IMR-90 (cell line): ENCODE measurements at regions of chr12 and their contacts with region 1.

Region 1: DNA sequence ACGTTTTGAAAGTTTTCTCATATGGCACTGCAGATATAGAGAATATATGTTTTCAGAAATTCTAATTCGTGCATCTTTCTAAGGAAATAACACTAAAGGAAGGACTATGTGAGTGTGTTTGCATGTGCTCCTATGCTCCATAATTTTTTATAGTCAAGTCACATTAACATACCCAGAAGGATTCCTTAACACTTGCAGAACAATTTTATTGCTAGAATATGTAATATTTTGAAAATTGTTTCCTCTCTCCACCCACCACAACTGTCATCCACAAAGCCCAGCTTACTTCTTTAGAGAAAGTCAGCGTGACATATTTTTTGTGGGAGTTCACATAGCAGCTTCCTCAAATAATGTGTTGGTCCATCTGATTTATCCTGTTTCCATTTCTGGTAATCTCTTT is 604.6 kb upstream of the MGAT4C start:
- DNase-seq: no peak
- ATAC-seq: no peak
- H3K4me3 ChIP-seq: no peak overlapping the region
- H3K27ac ChIP-seq: no peak overlapping the region
- H3K4me1 ChIP-seq: no peaks in the 10 kb centered on the region
- H3K27me3 ChIP-seq: no peaks in the 10 kb centered on the region
- CTCF ChIP-seq: no peak
- POLR2A ChIP-seq: no peak
- RAD21 ChIP-seq: no peak

Region 2: DNA sequence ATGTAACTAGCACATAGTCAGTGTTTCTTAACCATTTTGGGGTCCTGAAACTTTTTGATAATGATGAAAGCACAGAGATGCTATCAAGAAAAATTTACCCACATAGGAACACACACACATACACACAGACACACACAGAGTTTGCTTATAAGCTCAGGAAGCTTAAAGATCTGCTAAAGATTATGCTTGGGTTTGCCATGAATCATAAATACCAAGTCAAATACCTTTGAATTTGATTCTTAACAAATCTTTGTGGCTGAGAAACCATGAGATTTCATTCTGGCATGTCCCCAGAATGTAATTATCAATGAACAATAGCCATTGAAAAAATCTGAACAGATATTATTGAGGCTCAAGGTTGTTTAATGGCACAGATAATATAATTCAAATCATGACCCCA is 897.5 kb before region 1 on chr12:
- CTCF ChIA-PET with region 1: no interaction called
- POLR2A ChIA-PET with region 1: no interaction called
- dilution Hi-C with region 1: no loop called
- in situ Hi-C with region 1: no loop called
- intact Hi-C with region 1: no loop called
- DNase-seq: no peak
- ATAC-seq: no peak
- H3K4me3 ChIP-seq: no peak overlapping the region
- H3K27ac ChIP-seq: no peak overlapping the region
- H3K4me1 ChIP-seq: no peaks in the 10 kb centered on the region
- H3K27me3 ChIP-seq: no peaks in the 10 kb centered on the region
- CTCF ChIP-seq: no peak
- POLR2A ChIP-seq: no peak
- RAD21 ChIP-seq: no peak

Region 3: GRCh38 chr12:86838711-86839110 is 22.1 kb before region 1 on chr12:
- CTCF ChIA-PET with region 1: no interaction called
- POLR2A ChIA-PET with region 1: interaction called, 10 read pairs
- dilution Hi-C with region 1: no loop called
- in situ Hi-C with region 1: no loop called
- intact Hi-C with region 1: loop called (anchors 1 kb)
- DNase-seq: no peak
- ATAC-seq: no peak
- H3K4me3 ChIP-seq: no peak overlapping the region
- H3K27ac ChIP-seq: no peak overlapping the region
- H3K4me1 ChIP-seq: no peaks in the 10 kb centered on the region
- H3K27me3 ChIP-seq: no peaks in the 10 kb centered on the region
- CTCF ChIP-seq: no peak
- POLR2A ChIP-seq: no peak
- RAD21 ChIP-seq: no peak